ENCODE measurements at regions of chr2 and their contacts with region 1.

Region 1: DNA sequence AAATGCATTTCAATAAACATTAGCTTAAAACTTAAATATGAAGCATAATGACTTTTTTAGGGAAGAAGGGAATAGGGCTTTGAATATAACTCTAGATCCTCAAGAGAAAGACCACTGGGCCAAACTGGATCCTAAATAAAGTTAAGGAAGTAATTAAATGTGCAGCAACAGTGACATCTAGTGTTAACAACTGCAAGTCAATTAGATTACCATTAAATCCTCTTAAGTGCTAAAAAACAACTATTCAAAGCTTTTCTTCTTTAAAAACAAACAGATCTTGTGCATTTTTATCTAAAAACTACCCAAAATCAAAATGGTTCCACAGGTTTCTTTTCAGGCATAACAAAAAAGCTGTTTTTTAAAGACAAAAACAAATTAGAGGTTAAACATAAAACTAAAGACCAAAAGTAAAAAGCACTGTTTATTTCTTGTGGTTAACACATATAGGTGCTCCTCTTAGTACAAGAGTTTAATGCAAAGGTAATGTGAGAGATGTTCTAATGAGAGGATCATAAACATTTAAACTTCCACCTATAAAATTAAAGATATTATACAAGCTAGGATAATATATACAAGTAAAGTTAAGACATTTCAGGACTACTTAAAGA is 111.4 kb downstream of the THADA start:
- DNase-seq: no peak
- ATAC-seq: peak; percentile 49
- H3K4me3 Mint-ChIP-seq: no peak overlapping the region
- H3K27ac Mint-ChIP-seq: no peak overlapping the region
- H3K4me1 Mint-ChIP-seq: peaks cover 12% of the 10 kb centered on the region
- H3K27me3 Mint-ChIP-seq: no peaks in the 10 kb centered on the region

Region 2: GRCh38 chr2:42859006-42859552 is 625.3 kb before region 1 on chr2:
- CTCF ChIA-PET with region 1: interaction called, 15 read pairs
- POLR2A ChIA-PET with region 1: no interaction called
- DNase-seq: peak; percentile 79
- ATAC-seq: no peak
- H3K4me3 Mint-ChIP-seq: no peak overlapping the region
- H3K27ac Mint-ChIP-seq: no peak overlapping the region
- H3K4me1 Mint-ChIP-seq: no peaks in the 10 kb centered on the region
- H3K27me3 Mint-ChIP-seq: peaks cover 3% of the 10 kb centered on the region

Region 3: DNA sequence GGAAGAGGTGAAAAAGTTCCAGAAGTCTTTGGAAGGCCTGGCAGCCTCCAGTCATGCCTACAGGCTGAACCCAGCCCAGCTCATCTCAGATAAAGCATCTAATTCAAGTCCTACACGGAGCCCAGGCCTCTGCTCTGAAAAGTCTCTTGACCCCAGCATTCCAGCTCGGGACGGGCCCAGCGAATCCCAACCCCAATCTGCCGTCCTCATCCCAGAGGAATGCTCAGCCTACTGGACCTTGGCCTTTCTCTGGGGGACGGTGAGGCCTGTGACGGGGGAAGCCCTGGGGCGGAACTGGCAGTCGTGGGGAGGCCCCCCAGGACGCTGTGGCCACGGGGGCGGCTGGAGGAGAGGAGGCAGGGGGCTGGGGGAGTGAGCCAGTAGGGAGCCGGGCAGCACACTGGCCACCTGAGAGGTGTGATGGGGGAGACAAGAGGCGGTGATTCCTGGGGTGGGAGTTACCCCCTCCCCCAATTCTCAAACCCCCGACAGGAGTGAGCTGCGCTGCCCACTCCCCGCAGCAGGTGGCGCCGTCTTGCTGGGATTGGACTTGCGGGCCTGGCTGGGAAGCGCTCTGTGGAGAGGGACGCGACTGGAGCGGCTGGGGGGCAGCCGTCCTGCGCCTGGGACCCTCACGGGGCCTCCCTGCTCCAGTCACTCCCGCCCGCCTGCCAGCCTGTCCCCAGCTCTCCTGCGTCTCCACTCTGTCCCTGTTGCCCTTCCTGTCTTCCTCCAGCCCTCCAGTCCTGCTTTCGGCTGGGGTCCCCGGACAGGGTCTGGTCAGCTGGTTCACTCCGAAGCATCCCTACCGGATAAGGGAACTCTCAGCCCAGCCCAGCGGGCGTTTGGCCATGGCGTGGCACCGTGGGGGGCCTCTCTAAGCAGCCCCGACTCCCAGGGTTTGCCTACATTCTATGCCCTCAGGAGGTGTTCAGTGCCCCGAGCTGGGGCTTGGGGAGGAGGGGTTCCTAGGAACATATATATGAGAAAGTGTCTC is 509.4 kb before region 1 on chr2:
- CTCF ChIA-PET with region 1: interaction called, 23 read pairs
- POLR2A ChIA-PET with region 1: no interaction called
- DNase-seq: peak; percentile 53
- ATAC-seq: peak; percentile 40
- H3K4me3 Mint-ChIP-seq: no peak overlapping the region
- H3K27ac Mint-ChIP-seq: no peak overlapping the region
- H3K4me1 Mint-ChIP-seq: peaks cover 13% of the 10 kb centered on the region
- H3K27me3 Mint-ChIP-seq: peaks cover 5% of the 10 kb centered on the region

Region 4: DNA sequence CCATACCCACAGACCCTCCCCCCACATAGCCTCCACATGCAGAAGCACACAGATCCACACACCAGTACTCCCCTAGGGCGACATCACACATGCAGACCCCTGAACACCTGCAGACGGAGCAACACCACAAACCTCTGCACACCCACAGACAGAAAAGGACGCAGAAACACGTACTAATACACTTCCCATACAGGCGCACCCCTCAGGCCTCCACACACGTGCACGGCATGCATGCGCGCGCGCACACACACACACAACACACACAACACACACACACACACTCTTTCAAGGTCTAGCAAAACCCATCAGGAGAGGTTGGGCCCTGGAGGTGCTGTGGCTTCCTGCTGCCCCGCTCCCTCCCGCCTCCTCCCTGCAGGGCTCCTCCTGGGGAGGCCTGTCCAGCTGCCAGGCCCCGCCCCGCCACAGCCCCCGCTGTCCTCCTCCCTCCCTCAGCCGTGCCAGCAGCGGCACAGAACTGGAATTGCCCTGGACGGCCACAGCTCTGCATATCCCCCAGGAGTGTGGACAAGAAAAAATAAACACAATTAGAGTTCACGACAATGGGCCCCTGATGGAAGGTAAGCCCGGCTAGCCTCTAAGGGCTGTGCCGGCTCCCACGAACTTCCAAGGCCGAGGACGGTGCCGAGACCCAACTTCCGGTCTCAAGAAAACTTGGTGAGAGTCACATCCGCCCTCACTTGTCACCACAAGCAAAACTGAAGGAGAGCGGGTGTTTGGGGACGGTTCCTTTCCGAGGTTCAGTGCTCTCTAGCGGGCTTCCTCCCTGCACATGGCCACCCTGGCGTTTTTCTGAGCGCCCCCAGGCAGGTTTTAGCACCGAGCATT is 264.8 kb before region 1 on chr2:
- CTCF ChIA-PET with region 1: interaction called, 14 read pairs
- POLR2A ChIA-PET with region 1: interaction called, 3 read pairs
- DNase-seq: peak; percentile 93
- ATAC-seq: peak; percentile 52
- H3K4me3 Mint-ChIP-seq: peak overlapping the region; percentile 93
- H3K27ac Mint-ChIP-seq: peak overlapping the region; percentile 97
- H3K4me1 Mint-ChIP-seq: peaks cover 49% of the 10 kb centered on the region
- H3K27me3 Mint-ChIP-seq: no peaks in the 10 kb centered on the region

Region 5: DNA sequence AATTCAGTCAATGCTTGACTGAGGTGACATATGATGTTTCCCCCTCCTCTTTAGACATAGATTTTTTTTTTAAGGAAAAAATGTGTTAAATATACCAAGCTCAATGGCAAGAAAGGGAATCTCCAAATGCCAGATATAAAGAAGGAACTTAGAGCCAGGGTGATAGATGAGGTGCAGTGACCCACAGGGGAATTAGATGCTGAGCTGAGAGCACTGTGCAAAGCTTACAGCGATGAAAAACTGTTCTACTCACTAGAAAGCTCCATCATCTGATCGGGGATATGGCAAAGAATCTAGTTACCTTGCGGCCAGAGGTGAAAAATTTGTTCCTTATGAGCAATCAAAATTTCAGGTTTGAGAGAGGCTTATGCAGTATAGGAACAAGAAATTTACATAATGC is 107.1 kb before region 1 on chr2:
- CTCF ChIA-PET with region 1: no interaction called
- POLR2A ChIA-PET with region 1: no interaction called
- DNase-seq: no peak
- ATAC-seq: no peak
- H3K4me3 Mint-ChIP-seq: no peak overlapping the region
- H3K27ac Mint-ChIP-seq: no peak overlapping the region
- H3K4me1 Mint-ChIP-seq: no peaks in the 10 kb centered on the region
- H3K27me3 Mint-ChIP-seq: no peaks in the 10 kb centered on the region

Region 6: DNA sequence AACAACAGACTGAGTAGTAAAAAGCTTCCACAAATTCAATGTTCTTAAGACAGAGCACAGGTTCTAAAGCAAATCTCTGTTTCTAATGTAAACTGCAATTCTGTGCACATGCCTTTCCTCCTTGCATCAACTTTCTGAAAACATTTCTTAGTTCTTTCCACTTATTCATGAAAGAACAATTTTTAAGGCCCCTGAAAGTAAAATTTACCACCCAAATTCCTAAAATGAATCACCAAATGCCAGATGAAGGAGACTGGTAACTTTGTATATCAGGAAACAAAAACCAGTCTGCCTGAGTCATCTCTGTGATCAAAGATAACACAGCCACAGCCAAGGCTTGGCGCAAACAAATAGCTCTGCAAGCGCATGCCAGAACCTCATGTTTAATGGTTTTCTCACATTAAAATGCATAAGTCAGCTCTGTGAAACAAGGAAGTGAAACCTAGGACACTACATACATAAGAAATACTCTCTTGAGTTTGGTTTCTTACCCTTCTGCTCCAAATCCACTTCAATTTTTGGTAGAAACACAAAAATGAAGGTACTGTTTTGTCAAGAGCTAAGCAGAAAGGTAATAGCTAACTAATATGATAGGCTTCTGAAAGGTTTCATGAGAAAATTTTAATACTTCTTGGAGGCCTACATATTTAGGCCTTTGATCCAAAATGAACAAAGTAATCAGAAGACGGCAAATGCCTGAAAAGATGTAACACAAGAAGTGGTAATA is 58.0 kb before region 1 on chr2:
- CTCF ChIA-PET with region 1: interaction called, 10 read pairs
- POLR2A ChIA-PET with region 1: no interaction called
- DNase-seq: peak; percentile 87
- ATAC-seq: peak; percentile 97
- H3K4me3 Mint-ChIP-seq: peak overlapping the region; percentile 34
- H3K27ac Mint-ChIP-seq: peak overlapping the region; percentile 85
- H3K4me1 Mint-ChIP-seq: peaks cover 42% of the 10 kb centered on the region
- H3K27me3 Mint-ChIP-seq: no peaks in the 10 kb centered on the region

Region 7: GRCh38 chr2:43531251-43531650 is 46.8 kb after region 1 on chr2:
- CTCF ChIA-PET with region 1: no interaction called
- POLR2A ChIA-PET with region 1: no interaction called
- DNase-seq: no peak
- ATAC-seq: no peak
- H3K4me3 Mint-ChIP-seq: no peak overlapping the region
- H3K27ac Mint-ChIP-seq: no peak overlapping the region
- H3K4me1 Mint-ChIP-seq: no peaks in the 10 kb centered on the region
- H3K27me3 Mint-ChIP-seq: no peaks in the 10 kb centered on the region